ENCODE measurements at regions of chr3 and their contacts with region 1.

Region 1: DNA sequence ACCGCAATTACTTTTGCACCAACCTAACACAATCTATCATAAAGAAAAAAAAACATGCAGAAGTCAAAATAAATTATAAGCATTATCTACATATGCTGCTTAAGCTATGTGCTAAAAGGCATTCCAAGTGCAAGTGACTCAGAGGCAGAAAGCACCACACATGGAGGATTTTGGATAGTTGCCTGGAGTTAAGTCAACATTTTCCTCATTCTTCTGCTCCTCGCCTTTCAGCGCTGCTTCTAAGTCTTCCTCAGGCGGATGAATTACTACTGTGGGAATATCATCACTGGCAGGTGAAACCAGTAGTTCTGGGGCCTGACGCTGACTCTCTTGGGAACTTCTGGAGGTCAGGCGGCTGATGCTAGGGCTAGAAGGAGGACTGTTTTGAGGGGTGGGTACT is 53.1 kb downstream of the SLC4A7 start:
- DNase-seq: no peak
- H3K4me3 Mint-ChIP-seq: no peak overlapping the region
- H3K27ac Mint-ChIP-seq: no peak overlapping the region
- H3K4me1 Mint-ChIP-seq: no peaks in the 10 kb centered on the region
- H3K27me3 Mint-ChIP-seq: no peaks in the 10 kb centered on the region

Region 2: DNA sequence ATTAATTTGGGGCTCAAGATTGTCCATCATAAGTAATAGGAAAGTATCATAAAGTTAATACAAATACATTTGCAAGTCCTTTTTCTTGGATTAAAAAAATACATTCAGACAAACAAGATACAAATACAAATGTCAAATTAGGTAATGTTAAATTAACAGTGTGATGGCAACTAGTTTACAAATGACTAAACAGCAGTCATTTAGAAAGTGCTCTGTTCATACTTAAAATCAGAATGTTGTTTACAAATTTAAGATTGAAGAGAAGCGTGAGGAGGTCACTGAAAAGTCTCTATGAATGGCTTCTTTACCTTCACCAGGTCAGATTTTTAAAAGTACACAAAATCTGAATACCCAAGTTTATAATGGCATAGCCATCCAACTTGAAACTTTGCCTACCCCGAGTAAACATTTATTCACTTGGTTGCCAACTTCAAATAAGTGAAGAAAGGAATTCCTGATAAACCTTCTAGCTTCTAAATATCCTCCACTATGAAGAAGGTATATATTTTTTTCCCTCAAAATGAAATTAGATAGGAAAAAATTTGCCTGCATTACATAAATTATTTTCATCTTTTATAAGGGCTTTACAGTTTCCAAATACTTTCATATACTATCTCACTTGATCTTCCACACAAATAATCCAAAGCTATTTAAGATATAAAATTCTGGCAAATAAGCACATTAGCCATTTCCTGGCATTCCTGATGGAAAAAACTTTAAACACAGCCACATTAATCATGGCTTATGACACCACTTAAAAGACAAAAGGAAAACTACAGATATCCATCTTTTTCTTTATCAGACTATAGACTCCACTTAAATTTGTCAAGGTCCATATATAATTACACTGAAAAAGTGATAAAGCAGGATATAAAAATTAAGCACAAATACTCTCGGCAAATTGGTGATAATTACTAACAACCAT is 50.4 kb before region 1 on chr3:
- intact Hi-C with region 1: loop called (anchors 1 kb)
- DNase-seq: no peak
- H3K4me3 Mint-ChIP-seq: no peak overlapping the region
- H3K27ac Mint-ChIP-seq: no peak overlapping the region
- H3K4me1 Mint-ChIP-seq: no peaks in the 10 kb centered on the region
- H3K27me3 Mint-ChIP-seq: no peaks in the 10 kb centered on the region

Region 3: DNA sequence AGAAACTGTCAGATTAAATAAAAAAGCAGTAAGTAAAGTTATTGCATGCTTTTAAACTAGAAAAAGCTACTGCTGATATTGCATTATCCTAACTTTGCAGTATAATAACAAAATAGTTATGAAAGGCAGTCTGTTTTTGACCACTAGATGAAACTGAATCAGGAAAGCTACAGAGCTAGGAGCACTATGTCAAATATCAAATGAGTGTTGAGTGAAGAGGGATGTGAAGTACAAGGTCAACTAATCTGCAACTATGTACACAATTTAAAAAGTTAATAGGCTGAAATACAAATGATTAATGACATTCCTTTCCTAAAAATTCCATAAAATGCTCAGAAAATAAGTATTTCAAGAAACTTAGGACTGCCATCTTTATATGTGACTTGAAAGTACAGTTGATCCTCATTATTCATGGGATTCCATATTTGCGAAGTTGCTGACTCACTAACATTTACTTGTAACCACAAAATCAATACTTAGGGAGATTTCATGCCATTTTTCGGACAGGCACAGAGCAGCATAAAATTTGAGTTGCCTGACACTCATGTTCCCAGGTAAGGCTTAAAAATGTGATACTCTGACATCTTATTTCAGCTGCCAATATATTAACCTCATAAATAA is 18.5 kb after region 1 on chr3:
- intact Hi-C with region 1: loop called (anchors 2 kb)
- DNase-seq: no peak
- H3K4me3 Mint-ChIP-seq: no peak overlapping the region
- H3K27ac Mint-ChIP-seq: no peak overlapping the region
- H3K4me1 Mint-ChIP-seq: peaks cover 26% of the 10 kb centered on the region
- H3K27me3 Mint-ChIP-seq: no peaks in the 10 kb centered on the region

Region 4: GRCh38 chr3:27467545-27467944 is 36.4 kb after region 1 on chr3:
- intact Hi-C with region 1: no loop called
- DNase-seq: no peak
- H3K4me3 Mint-ChIP-seq: no peak overlapping the region
- H3K27ac Mint-ChIP-seq: no peak overlapping the region
- H3K4me1 Mint-ChIP-seq: peaks cover 8% of the 10 kb centered on the region
- H3K27me3 Mint-ChIP-seq: no peaks in the 10 kb centered on the region

Region 5: DNA sequence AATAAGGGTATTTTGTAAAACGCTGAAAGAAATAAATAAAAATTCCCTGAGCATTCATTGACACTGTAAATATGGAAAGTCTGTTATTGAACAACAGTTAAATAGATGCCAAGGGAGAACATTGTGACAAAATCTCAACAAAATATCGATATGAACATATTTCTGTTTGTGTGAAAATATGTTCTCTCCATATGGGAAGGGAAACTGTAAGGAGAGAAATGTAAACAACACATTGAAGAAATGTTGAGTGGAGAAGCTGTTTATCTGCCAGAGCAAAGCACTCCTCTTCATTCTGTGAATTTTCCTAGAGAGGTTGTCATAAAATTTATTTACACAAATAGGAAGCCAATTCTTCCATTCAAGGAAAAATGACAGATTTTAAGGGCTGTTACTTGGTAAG is 348.1 kb after region 1 on chr3:
- intact Hi-C with region 1: no loop called
- DNase-seq: no peak
- H3K4me3 Mint-ChIP-seq: no peak overlapping the region
- H3K27ac Mint-ChIP-seq: no peak overlapping the region
- H3K4me1 Mint-ChIP-seq: no peaks in the 10 kb centered on the region
- H3K27me3 Mint-ChIP-seq: no peaks in the 10 kb centered on the region

Measured in activated T-helper 1 cell treated with anti-CD3 and anti-CD28 coated beads, Interleukin-12 subunit alpha, Interleukin-12 subunit beta, Interleukin-2, Interleukin-4 antibody, amounts not matched to agents 30 ng/mL and 10 ng/mL and 1 ng/mL, durations not matched to agents 14 hours and 24 hours and 36 hours (primary cell).